Heart left ventricle (tissue), 16 donors: ENCODE measurements at regions of chr9 and their contacts with region 1.

Region 1: DNA sequence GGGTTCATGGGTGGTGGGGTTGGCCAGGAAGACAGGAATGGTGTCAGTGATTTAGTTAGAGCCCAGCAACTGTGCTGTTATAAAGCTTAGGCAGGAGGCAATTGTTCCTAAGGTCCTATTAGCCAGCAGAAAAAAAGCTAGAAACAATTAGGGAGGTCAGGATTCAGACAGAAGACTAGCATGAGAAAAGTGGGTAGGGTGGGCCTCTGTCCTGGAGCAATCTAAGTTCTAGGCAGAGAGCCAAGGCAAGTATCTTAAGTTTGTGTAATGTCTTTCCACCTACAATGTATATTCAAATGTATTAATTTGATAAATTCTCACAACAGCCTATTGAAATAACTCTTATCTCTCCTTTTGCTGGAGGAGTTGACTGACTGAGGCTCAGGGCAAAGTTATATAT is 6.1 kb upstream of the ZFAND5 start:
- DNase-seq: no peak
- ATAC-seq: no peak
- H3K4me3 ChIP-seq: no peak overlapping the region
- H3K27ac ChIP-seq: no peak overlapping the region
- H3K4me1 ChIP-seq: peaks cover 0 to 7% (median 4%) of the 10 kb centered on the region in 12 donors
- H3K27me3 ChIP-seq: no peaks in the 10 kb centered on the region
- CTCF ChIP-seq: no peak
- POLR2A ChIP-seq: no peak

Region 2: DNA sequence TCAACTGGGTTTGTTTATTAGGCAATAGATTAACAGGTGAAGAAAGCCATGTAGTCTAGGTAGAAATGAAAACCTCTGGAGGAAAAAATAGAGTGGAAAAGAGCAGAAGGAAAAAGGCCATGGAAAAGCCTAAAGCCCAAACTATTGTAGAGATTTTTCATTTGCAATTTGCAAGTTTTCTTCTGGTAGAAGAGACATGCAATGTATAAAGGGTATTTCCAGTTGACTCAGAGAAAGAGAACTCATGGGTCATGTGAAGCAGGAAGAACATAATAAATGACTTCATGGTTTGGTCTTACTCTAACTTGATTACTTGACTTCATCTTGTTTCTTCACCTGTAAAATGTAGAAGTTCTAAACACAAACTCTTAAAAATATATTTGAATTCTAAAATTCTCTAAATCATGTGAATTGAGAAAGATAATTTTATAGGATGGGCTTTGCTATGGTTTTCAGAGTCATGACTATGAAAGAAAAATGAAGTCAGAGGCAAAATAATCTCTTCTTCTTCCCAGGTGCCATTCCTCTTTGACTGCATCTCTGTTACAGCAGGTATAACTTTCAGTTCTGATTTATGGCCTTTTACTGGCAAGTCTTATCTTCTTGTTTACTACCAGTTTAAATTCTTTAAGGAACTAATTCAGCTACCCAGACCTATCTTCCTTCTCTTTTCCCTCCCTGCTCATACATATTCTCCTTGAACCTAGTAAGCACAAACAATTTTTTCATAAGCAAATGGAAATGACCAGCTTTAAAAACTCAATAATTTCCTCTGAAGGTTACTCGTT is 102.5 kb after region 1 on chr9:
- intact Hi-C with region 1: loop called in 2 of 10 experiments (anchors 5 to 10 kb)
- DNase-seq: no peak
- ATAC-seq: no peak
- H3K4me3 ChIP-seq: no peak overlapping the region
- H3K27ac ChIP-seq: peak overlapping the region in 1 of 12 donors; percentile 48
- H3K4me1 ChIP-seq: peaks cover 0 to 24% (median 7%) of the 10 kb centered on the region in 12 donors
- H3K27me3 ChIP-seq: no peaks in the 10 kb centered on the region
- CTCF ChIP-seq: no peak
- POLR2A ChIP-seq: no peak

Region 3: GRCh38 chr9:73167614-73168013 is 796.5 kb after region 1 on chr9:
- intact Hi-C with region 1: no loop called
- DNase-seq: no peak
- ATAC-seq: no peak
- H3K4me3 ChIP-seq: no peak overlapping the region
- H3K27ac ChIP-seq: peak overlapping the region in 1 of 12 donors; percentile 29
- H3K4me1 ChIP-seq: no peaks in the 10 kb centered on the region
- H3K27me3 ChIP-seq: no peaks in the 10 kb centered on the region
- CTCF ChIP-seq: no peak
- POLR2A ChIP-seq: no peak